MCF 10A (cell line): ENCODE measurements at regions of chr3 and their contacts with region 1.

Region 1: DNA sequence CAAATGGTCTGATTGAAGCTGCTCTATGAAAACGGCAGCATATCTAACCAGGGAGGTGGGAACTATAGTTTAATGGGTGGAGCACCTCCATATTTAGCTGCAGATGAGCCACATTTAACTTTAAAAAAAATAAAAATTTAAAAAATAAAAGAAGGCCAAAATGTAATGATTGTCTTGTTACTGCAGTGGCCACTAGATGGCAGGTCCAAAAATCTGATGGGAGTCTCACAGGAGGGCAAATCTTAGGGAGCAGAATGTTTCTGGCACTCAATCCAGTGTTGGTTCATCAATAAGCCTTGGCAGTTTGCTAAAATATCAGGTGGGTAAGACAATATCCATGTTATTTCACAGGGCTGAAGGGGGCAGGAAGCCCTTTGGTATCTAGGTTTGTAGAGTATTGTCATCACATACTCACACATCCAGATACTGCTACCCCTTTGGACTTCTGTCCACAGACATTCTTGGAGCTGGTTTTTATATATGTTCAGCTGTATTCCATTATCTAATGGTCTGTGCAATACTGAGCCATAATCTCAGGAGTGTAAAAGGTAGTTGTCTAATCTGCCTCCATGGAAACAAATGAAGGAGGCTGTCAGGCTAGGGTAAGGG is 233.3 kb downstream of the TIGIT start:
- DNase-seq: peak; percentile 30
- H3K4me3 Mint-ChIP-seq: no peak overlapping the region
- H3K27ac Mint-ChIP-seq: no peak overlapping the region
- H3K4me1 Mint-ChIP-seq: no peaks in the 10 kb centered on the region
- H3K27me3 Mint-ChIP-seq: no peaks in the 10 kb centered on the region
- CTCF ChIP-seq: peak; percentile 41

Region 2: DNA sequence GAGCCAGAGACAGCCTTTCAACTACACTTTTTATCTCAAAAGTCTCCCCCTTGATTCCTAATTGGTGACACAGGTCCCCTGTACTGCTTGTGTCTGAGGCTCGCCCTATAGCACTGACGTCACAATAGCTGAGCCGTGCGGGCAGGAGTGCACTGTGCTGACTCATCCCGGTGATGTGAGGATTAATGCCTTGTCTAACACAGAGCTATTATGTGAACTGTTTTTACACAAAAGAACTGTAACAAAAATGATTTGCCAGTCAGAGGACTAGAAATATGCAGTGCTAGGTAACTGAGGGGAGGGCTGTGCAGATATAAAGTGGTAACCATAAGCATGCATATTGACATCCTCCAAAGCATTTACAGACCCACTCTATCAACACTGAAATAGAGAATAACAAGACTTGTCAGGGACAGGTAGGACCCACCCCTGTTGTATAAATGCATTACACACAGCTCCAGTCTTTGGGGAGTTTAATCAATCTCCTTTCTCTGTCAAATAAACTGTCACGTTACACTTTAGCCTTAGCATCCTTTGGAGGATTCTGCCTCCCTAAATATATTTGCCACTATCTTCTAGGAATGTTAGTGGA is 28.3 kb before region 1 on chr3:
- CTCF ChIA-PET with region 1: interaction called, 12 read pairs
- POLR2A ChIA-PET with region 1: no interaction called
- intact Hi-C with region 1: no loop called
- DNase-seq: peak; percentile 89
- H3K4me3 Mint-ChIP-seq: no peak overlapping the region
- H3K27ac Mint-ChIP-seq: no peak overlapping the region
- H3K4me1 Mint-ChIP-seq: peaks cover 37% of the 10 kb centered on the region
- H3K27me3 Mint-ChIP-seq: no peaks in the 10 kb centered on the region
- CTCF ChIP-seq: no peak

Region 3: DNA sequence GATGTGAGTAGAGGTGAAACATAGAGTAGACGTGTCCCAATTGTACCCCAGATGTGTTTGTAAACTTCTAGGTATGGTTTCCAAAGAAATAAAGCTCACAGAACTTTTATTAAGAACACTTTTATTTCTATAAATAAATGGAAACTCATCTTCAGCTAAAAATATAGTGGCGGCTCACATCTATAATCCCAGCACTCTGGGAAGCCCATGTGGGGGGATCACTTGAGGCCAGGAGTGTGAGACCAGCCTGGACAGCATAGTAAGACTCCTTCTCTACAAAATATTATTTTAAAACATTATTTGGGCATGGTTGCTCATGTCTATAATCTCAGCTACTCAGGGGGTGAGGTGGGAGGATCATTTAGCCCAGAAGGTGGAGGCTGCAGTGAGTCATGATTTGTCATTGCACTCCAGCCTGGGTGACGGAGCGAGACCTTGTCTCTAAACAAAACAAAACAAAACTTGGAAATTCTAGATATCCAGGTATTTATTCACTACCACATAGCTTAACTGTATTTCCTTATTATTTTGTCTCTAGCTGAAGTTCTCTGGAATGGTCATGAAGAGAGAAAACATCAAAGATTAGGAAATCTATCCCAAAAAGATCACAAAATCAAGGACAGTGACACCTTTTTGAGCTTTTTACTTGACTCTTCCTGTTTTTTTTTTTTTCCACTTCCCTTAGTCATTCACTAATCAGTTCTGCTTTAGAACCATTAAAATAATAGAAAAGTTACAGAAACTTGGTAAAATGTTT is 24.8 kb after region 1 on chr3:
- CTCF ChIA-PET with region 1: interaction called, 18 read pairs
- POLR2A ChIA-PET with region 1: no interaction called
- intact Hi-C with region 1: no loop called
- DNase-seq: peak; percentile 78
- H3K4me3 Mint-ChIP-seq: no peak overlapping the region
- H3K27ac Mint-ChIP-seq: peak overlapping the region; percentile 83
- H3K4me1 Mint-ChIP-seq: peaks cover 9% of the 10 kb centered on the region
- H3K27me3 Mint-ChIP-seq: no peaks in the 10 kb centered on the region
- CTCF ChIP-seq: no peak

Region 4: DNA sequence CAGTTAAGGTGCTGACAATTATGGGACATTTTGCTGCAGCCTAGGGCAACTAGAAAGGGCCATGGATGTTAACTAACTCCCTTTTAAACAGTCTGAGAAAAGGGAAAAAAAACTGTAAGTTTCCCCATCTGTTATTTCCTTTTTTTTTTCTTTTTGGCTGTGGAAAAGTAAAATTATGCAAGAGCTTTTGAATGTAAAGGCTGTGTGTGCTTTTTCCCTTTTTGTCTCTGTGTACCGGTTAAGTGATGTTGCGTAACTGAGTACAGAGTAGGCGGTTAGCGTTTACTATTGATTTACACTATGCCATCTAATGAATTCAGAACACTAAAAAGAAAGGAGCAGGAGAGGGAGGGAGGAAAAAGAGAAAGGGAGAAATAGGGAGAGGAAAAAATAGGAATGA is 170.3 kb after region 1 on chr3:
- CTCF ChIA-PET with region 1: interaction called, 3 read pairs
- POLR2A ChIA-PET with region 1: no interaction called
- intact Hi-C with region 1: loop called (anchors 5 kb)
- DNase-seq: peak; percentile 35
- H3K4me3 Mint-ChIP-seq: no peak overlapping the region
- H3K27ac Mint-ChIP-seq: no peak overlapping the region
- H3K4me1 Mint-ChIP-seq: peaks cover 7% of the 10 kb centered on the region
- H3K27me3 Mint-ChIP-seq: no peaks in the 10 kb centered on the region
- CTCF ChIP-seq: no peak

Region 5: GRCh38 chr3:114721864-114722263 is 194.7 kb after region 1 on chr3:
- CTCF ChIA-PET with region 1: no interaction called
- POLR2A ChIA-PET with region 1: no interaction called
- intact Hi-C with region 1: no loop called
- DNase-seq: no peak
- H3K4me3 Mint-ChIP-seq: no peak overlapping the region
- H3K27ac Mint-ChIP-seq: no peak overlapping the region
- H3K4me1 Mint-ChIP-seq: peaks cover 6% of the 10 kb centered on the region
- H3K27me3 Mint-ChIP-seq: no peaks in the 10 kb centered on the region
- CTCF ChIP-seq: no peak